ENCODE measurements at regions of chr1 and their contacts with region 1.

Region 1: DNA sequence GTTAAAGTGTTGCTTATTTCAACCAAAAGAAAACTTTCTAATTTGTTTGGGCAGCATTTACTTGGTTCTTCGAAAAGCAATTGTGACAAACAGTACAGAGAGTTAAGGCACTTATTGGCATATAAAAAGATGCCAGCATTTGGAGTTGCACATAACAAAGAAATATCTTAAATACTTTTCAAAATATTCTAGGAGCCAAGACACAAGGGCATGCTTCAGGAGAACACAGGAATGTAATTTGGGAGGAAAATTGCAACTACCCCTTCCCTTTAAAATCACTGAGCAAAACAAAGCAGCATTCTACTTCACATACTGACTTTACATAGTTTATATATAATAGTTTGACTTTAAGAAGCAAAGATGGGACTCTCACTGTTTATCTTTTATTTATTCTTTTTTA is 4.6 kb upstream of the TIE1 start:
- DNase-seq: no peak

Region 2: DNA sequence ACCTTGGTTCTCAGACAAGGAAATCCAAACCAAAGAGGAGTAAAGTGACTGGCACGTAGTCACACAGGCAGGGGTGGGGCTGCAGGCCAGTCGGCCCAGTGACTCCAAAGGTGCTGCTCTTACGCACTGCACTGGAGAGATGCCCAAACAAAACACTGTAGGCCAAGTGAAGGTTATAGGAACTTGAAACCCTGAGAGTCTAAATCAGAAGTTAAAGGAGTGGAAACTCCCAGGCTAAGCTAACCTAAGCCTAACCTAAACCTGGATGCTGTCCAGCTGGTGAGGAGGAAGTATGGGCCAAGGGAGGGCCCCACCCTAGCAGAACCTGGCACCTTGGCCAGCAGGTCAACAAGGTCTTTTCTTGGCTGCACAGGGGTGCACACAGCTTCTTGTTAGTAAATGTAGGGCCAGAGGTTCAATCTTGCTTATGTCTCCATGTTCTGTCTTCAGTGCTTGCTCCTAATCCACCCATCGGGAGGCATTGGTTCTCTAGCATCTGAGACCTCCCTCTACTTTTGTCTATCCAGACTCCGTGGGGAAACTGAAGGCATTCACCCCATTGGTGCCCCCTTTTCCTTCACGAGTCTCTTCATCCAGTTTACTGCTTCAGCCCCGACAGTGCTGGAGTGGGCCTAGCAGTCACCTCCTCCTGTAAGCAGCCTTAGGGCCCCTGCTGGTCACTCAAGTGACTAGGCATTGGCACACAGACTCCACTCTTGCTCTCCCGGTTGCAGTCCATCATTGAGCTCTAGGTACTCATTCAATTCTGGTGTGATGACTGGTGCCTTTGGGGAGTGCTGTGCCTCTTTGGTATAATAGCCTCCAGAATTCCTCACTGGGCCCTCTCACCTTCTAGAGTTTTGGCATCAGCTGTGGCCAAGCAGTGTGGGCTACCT is 39.3 kb before region 1 on chr1:
- intact Hi-C with region 1: no loop called
- DNase-seq: no peak

Region 3: GRCh38 chr1:43358746-43359693 is 62.8 kb after region 1 on chr1 and contains the start of gene CDC20:
- intact Hi-C with region 1: loop called (anchors 5 kb)
- DNase-seq: peak; percentile 95 to 100 (median 98)